ENCODE measurements at regions of chr13 and their contacts with region 1.

Region 1: GRCh38 chr13:49936085-49936940 is at the start of gene SPRYD7:
- DNase-seq: peak; percentile 99
- ATAC-seq: peak; percentile 99
- H3K4me3 Mint-ChIP-seq: peak within 1 kb of the TSS; percentile 88
- H3K27ac Mint-ChIP-seq: peak within 1 kb of the TSS; percentile 76; the same call in 1 of the 2 replicates
- H3K4me1 Mint-ChIP-seq: peaks cover 6% of the 10 kb centered on the region
- H3K27me3 Mint-ChIP-seq: peaks cover 12% of the 10 kb centered on the region
- CTCF ChIP-seq: peak; percentile 95
- total RNA-seq, gene SPRYD7: 3.0 to 3.8 TPM (median 3.1 TPM) in 3 replicates

Region 2: DNA sequence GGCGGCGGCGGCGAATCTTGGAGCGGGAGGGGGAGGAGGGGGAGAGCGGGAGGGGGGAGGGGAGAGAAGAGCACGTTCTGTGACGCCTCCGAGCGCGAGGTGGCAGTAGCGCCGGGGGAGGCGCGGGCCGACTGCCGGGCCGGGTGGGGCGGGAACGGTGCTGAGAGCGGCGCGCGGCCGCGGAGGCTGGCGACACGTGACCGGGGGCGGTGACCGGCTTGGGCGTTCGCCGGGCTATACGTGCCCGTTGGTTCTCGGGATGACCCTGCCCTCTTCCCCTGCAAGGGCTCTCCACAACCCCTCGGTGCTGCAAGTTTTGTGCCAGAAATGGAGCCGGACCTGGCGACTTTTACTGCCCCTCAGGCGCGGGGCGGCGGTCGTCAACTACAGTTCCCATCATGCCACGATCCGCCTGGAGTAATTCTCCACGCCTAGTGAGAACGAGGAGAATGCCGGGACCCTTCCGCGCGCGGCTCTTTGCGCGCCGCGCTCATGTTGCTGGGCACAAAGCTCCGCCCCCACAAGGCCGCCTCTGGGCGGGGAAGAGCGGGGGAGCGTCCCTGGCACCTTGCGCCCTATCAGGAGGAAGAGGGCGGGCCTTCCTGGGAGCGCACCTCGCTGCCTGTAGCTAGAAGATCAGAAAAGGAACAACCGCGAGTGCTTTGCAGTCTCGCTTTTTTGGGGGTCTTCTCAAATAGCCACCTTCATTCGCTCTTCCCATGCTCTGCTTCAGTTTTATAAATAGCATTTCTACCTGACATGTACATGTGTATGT is 143.6 kb before region 1 on chr13 and contains the start of gene KPNA3:
- CTCF ChIA-PET with region 1: interaction called, 11 read pairs
- POLR2A ChIA-PET with region 1: interaction called, 4 read pairs
- DNase-seq: peak; percentile 95
- ATAC-seq: peak; percentile 95
- H3K4me3 Mint-ChIP-seq: peak within 1 kb of the TSS; percentile 96
- H3K27ac Mint-ChIP-seq: peak within 1 kb of the TSS; percentile 99
- H3K4me1 Mint-ChIP-seq: peaks cover 32% of the 10 kb centered on the region
- H3K27me3 Mint-ChIP-seq: no peaks in the 10 kb centered on the region
- CTCF ChIP-seq: no peak
- total RNA-seq, gene KPNA3: 44.2 to 47.6 TPM (median 44.4 TPM) in 3 replicates

Region 3: GRCh38 chr13:49869519-49869918 is 66.8 kb before region 1 on chr13:
- CTCF ChIA-PET with region 1: interaction called, 16 read pairs
- POLR2A ChIA-PET with region 1: no interaction called
- DNase-seq: peak; percentile 69
- ATAC-seq: peak; percentile 87
- H3K4me3 Mint-ChIP-seq: no peak overlapping the region
- H3K27ac Mint-ChIP-seq: no peak overlapping the region
- H3K4me1 Mint-ChIP-seq: no peaks in the 10 kb centered on the region
- H3K27me3 Mint-ChIP-seq: peaks cover 3% of the 10 kb centered on the region; the same call in 1 of the 2 replicates
- CTCF ChIP-seq: peak; percentile 24; the same call in 1 of the 2 replicates

Region 4: DNA sequence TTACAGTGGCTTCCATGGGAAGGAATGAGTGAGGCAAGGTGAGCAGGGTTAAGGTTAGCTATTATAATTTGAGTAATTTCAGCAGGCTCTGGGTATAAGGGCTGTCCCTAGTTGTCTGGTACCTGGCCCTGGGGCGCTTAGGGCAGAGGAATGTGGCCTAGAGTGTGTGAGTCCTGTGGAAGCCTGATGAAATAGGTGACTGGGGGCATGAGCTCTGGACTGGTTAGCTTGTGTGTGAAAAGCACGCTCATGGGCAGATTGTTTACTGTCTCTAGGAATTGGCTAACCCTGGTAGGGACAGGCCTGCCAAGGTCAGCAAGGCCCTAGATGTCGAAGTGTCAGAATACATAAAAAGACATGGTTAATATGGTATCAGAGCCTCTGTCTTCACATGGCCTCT is 42.7 kb before region 1 on chr13:
- CTCF ChIA-PET with region 1: no interaction called
- POLR2A ChIA-PET with region 1: no interaction called
- DNase-seq: no peak
- ATAC-seq: no peak
- H3K4me3 Mint-ChIP-seq: no peak overlapping the region
- H3K27ac Mint-ChIP-seq: no peak overlapping the region
- H3K4me1 Mint-ChIP-seq: no peaks in the 10 kb centered on the region
- H3K27me3 Mint-ChIP-seq: peaks cover 5% of the 10 kb centered on the region; the same call in 1 of the 2 replicates
- CTCF ChIP-seq: no peak

Region 5: DNA sequence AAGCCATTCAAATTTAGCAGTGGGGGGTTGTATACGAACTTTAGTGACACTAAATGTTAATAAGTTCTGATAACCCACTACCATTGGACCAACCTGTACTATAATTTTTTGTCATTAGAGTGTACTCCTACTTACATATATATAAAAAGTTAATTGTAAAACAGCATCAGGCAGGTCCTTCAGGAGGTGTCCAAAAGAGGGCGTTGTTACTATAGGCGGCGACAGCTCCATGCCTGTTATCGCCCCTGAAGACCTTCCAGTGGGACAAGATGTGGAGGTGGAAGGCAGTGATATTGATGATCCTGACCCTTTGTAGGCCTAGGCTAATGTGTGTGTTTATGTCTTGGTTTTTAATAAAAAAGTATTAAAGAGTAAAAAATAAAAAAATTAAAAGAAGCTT is 27.7 kb before region 1 on chr13:
- CTCF ChIA-PET with region 1: interaction called, 16 read pairs
- POLR2A ChIA-PET with region 1: interaction called, 3 read pairs
- DNase-seq: peak; percentile 23
- ATAC-seq: peak; percentile 67
- H3K4me3 Mint-ChIP-seq: no peak overlapping the region
- H3K27ac Mint-ChIP-seq: no peak overlapping the region
- H3K4me1 Mint-ChIP-seq: no peaks in the 10 kb centered on the region
- H3K27me3 Mint-ChIP-seq: no peaks in the 10 kb centered on the region
- CTCF ChIP-seq: no peak

Region 6: DNA sequence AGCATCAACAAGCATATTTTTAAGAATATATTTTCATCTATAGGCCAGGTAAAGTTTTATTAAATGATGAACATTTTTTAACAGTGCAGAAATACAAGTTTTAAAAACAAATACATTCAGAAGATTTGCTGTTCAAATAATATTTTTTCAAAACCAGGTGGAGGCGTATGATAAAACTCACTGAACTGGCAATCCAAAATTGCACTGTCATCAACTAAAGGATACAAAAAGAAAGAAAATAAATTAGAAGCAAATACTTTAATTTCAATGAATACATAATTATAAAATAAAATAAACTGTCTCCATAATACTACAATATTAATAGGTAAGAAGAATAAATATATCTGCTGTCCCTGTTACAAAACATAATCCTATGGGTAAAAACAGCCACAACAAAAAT is 21.4 kb before region 1 on chr13:
- CTCF ChIA-PET with region 1: interaction called, 13 read pairs
- POLR2A ChIA-PET with region 1: no interaction called
- DNase-seq: no peak
- ATAC-seq: no peak
- H3K4me3 Mint-ChIP-seq: no peak overlapping the region
- H3K27ac Mint-ChIP-seq: no peak overlapping the region
- H3K4me1 Mint-ChIP-seq: no peaks in the 10 kb centered on the region
- H3K27me3 Mint-ChIP-seq: no peaks in the 10 kb centered on the region
- CTCF ChIP-seq: no peak

Region 7: GRCh38 chr13:49976314-49977258 is 40.3 kb after region 1 on chr13:
- CTCF ChIA-PET with region 1: interaction called, 11 read pairs
- POLR2A ChIA-PET with region 1: interaction called, 3 read pairs
- DNase-seq: peak; percentile 76
- ATAC-seq: peak; percentile 89
- H3K4me3 Mint-ChIP-seq: no peak overlapping the region
- H3K27ac Mint-ChIP-seq: no peak overlapping the region
- H3K4me1 Mint-ChIP-seq: 0 out of 2 replicates have a peak, but pooled peaks cover 5% of the 10 kb centered on the region
- H3K27me3 Mint-ChIP-seq: no peaks in the 10 kb centered on the region; the same call in 1 of the 2 replicates
- CTCF ChIP-seq: peak; percentile 95

Region 8: GRCh38 chr13:50123862-50124536 is 187.7 kb after region 1 on chr13:
- CTCF ChIA-PET with region 1: interaction called, 13 read pairs
- POLR2A ChIA-PET with region 1: interaction called, 3 read pairs
- DNase-seq: peak; percentile 87
- ATAC-seq: peak; percentile 33
- H3K4me3 Mint-ChIP-seq: peak overlapping the region; percentile 78
- H3K27ac Mint-ChIP-seq: no peak overlapping the region
- H3K4me1 Mint-ChIP-seq: peaks cover 52% of the 10 kb centered on the region
- H3K27me3 Mint-ChIP-seq: peaks cover 80% of the 10 kb centered on the region
- CTCF ChIP-seq: no peak

Region 9: DNA sequence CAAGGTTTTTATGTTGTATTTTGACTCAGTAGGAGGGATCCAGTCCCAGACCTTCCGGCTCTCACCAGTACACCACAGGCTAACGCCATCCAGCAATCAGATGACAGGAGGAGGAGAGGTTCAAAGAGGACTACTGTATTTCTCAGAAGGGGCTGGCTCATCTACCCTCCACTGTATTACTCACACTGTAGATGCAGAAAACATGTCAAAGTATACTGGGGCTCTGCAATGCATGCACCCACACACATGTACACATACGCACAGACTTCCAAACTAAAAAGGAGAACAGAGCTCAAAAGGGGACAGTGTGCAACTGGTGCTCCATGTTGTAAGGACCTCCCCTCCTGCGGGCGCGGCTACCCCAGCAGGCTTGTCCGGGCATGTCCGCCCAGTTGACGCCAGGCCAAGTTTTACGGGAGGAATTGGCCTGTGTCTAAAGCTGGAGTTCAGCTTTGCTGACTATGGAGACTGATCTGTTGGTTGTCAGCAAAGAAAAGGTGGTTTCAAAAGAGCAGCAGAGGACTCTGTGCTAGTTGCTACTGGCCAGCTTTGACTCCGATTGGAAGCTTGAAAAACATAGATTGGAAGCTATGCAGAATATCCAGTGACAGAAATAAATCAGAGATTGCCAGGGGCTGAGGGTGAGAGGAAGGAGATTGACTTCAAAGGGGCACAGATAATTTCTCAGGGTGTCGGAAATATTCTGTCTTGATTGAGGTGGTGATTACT is 593.0 kb after region 1 on chr13:
- CTCF ChIA-PET with region 1: no interaction called
- POLR2A ChIA-PET with region 1: no interaction called
- DNase-seq: peak; percentile 35
- ATAC-seq: peak; percentile 65
- H3K4me3 Mint-ChIP-seq: no peak overlapping the region
- H3K27ac Mint-ChIP-seq: peak overlapping the region; percentile 95
- H3K4me1 Mint-ChIP-seq: peaks cover 37% of the 10 kb centered on the region
- H3K27me3 Mint-ChIP-seq: no peaks in the 10 kb centered on the region
- CTCF ChIP-seq: no peak

Region 10: GRCh38 chr13:50549221-50549942 is 613.1 kb after region 1 on chr13:
- CTCF ChIA-PET with region 1: no interaction called
- POLR2A ChIA-PET with region 1: no interaction called
- DNase-seq: no peak
- ATAC-seq: no peak
- H3K4me3 Mint-ChIP-seq: no peak overlapping the region
- H3K27ac Mint-ChIP-seq: no peak overlapping the region
- H3K4me1 Mint-ChIP-seq: peaks cover 20% of the 10 kb centered on the region
- H3K27me3 Mint-ChIP-seq: no peaks in the 10 kb centered on the region
- CTCF ChIP-seq: no peak